HEK293 (cell line): ENCODE measurements at regions of chr20 and their contacts with region 1.

Region 1: GRCh38 chr20:2206957-2207769 is 88.6 kb upstream of the TGM3 start:
- H3K4me3 ChIP-seq: peak overlapping the region; percentile 52
- H3K27ac ChIP-seq: peak overlapping the region; percentile 60; the same call in 1 of the 2 replicates
- H3K4me1 ChIP-seq: 0 out of 2 replicates have a peak, but pooled peaks cover 2% of the 10 kb centered on the region
- CTCF ChIP-seq: peak; percentile 92

Region 2: GRCh38 chr20:2118783-2119182 is 88.4 kb before region 1 on chr20:
- CTCF ChIA-PET with region 1: no interaction called
- POLR2A ChIA-PET with region 1: no interaction called
- H3K4me3 ChIP-seq: no peak overlapping the region
- H3K27ac ChIP-seq: no peak overlapping the region
- H3K4me1 ChIP-seq: peaks cover 4% of the 10 kb centered on the region
- CTCF ChIP-seq: no peak

Region 3: GRCh38 chr20:2217857-2218539 is 10.8 kb after region 1 on chr20:
- CTCF ChIA-PET with region 1: interaction called, 12 read pairs
- POLR2A ChIA-PET with region 1: interaction called, 3 read pairs
- H3K4me3 ChIP-seq: no peak overlapping the region
- H3K27ac ChIP-seq: no peak overlapping the region
- H3K4me1 ChIP-seq: no peaks in the 10 kb centered on the region
- CTCF ChIP-seq: no peak

Region 4: DNA sequence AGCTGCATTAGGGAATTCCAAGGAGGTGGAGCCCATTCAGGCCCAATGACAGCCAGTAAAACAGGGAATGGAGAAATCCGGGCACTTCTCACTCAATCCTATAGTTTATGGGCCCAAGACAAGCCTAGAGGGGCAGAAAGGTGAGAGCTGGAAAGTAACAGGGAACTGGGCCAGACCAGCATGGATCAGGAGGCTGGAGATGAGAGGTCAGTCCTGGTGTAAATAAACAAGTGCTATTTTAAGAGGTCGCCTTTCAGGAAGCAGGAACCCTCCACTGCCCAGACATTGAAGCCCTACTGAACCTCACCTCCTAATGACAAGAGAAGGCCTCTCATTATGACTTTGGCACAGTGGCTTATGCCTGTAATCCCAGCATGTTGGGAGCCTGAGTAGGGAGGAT is 31.4 kb after region 1 on chr20:
- CTCF ChIA-PET with region 1: interaction called, 10 read pairs
- POLR2A ChIA-PET with region 1: no interaction called
- H3K4me3 ChIP-seq: no peak overlapping the region
- H3K27ac ChIP-seq: no peak overlapping the region
- H3K4me1 ChIP-seq: no peaks in the 10 kb centered on the region
- CTCF ChIP-seq: no peak

Region 5: GRCh38 chr20:2402271-2402980 is 195.3 kb after region 1 on chr20:
- CTCF ChIA-PET with region 1: interaction called, 23 read pairs
- POLR2A ChIA-PET with region 1: no interaction called
- H3K4me3 ChIP-seq: no peak overlapping the region
- H3K27ac ChIP-seq: no peak overlapping the region
- H3K4me1 ChIP-seq: no peaks in the 10 kb centered on the region
- CTCF ChIP-seq: peak; percentile 45; the same call in 1 of the 2 replicates

Region 6: DNA sequence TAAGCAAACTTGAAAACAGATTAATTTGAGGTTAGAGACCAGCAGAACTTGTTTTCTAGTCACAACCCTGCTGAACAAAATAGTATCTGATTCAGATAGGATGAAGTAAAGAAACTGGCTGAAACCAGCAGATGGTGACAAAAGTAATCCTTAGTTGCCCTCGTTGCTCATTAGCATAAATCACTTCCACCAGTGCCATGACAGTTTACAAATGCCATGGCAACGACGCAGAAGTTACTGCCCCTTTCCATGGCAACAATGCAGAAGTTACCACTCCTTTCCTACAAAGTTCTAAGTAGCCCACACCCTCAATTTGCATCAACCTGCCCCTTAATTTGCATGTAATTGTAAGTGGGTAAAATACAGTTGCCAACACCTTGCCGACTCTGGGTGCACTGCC is 239.7 kb after region 1 on chr20:
- CTCF ChIA-PET with region 1: interaction called, 68 read pairs
- POLR2A ChIA-PET with region 1: interaction called, 7 read pairs
- H3K4me3 ChIP-seq: no peak overlapping the region
- H3K27ac ChIP-seq: no peak overlapping the region
- H3K4me1 ChIP-seq: no peaks in the 10 kb centered on the region
- CTCF ChIP-seq: no peak